H1 (cell line): ENCODE measurements at regions of chr17 and their contacts with region 1.

Region 1: DNA sequence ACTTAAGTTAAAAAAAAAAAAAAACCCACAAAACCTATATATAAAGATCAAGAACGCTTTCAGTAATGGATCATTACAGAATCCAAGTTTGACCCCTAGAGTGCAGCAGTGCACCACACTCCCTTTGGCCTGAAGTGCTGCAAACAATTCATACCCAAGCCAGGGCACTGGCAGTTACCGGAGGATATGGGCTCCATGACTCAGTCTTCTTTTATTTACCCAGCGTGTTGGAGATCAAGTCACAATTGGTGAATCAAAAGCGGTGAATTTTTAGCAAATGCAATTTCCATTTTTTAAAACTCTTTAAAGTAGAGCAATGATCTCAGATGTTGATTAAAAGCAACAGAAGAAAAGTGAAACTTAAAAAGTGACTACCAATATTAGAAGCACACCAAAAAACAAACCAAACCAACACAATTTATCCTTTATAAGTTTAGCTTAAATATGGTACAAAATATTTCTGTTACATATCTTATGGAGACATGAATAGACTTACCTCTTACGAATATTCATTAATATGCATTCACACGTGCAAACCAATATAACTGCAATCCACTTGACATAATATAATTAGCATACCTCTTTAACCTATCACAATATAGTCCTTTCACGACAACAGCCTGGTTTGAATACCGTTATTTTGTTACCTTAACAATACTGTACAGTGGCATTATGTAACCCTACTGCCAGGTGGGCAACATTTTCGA is 46.3 kb downstream of the ZNF652 start:
- DNase-seq: peak; percentile 31 to 62
- H3K4me3 ChIP-seq: no peak overlapping the region
- H3K27ac ChIP-seq: no peak overlapping the region
- H3K4me1 ChIP-seq: no peaks in the 10 kb centered on the region
- H3K27me3 ChIP-seq: no peaks in the 10 kb centered on the region
- CTCF ChIP-seq: peak; percentile 27 to 83 (median 71)
- EP300 ChIP-seq: no peak
- POLR2A ChIP-seq: no peak
- RAD21 ChIP-seq: peak; percentile 96 to 98

Region 2: GRCh38 chr17:49146620-49147306 is 168.9 kb before region 1 on chr17:
- CTCF ChIA-PET with region 1: no interaction called
- POLR2A ChIA-PET with region 1: no interaction called
- DNase-seq: no peak
- H3K4me3 ChIP-seq: no peak overlapping the region
- H3K27ac ChIP-seq: no peak overlapping the region
- H3K4me1 ChIP-seq: no peaks in the 10 kb centered on the region
- H3K27me3 ChIP-seq: no peaks in the 10 kb centered on the region
- CTCF ChIP-seq: no peak
- EP300 ChIP-seq: no peak
- POLR2A ChIP-seq: no peak
- RAD21 ChIP-seq: no peak

Region 3: GRCh38 chr17:49361902-49362722 is 46.4 kb after region 1 on chr17 and contains the start of gene ZNF652:
- CTCF ChIA-PET with region 1: interaction called, 47 read pairs
- POLR2A ChIA-PET with region 1: no interaction called
- DNase-seq: peak; percentile 93 to 97
- H3K4me3 ChIP-seq: peak within 1 kb of the TSS; percentile 86 to 98 (median 89)
- H3K27ac ChIP-seq: peak within 1 kb of the TSS; percentile 82; the same call in 1 of the 2 replicates
- H3K4me1 ChIP-seq: peaks cover 5 to 14% (median 7%) of the 10 kb centered on the region in 4 experiments; a peak in 6 of 7 replicates
- H3K27me3 ChIP-seq: no peaks in the 10 kb centered on the region
- CTCF ChIP-seq: no peak
- EP300 ChIP-seq: no peak
- POLR2A ChIP-seq: peak in 1 of 2 experiments; percentile 11; a peak in 1 of 3 replicates
- RAD21 ChIP-seq: no peak
- total RNA-seq, gene ZNF652: 36.5 and 39.6 TPM in 2 replicates

Region 4: DNA sequence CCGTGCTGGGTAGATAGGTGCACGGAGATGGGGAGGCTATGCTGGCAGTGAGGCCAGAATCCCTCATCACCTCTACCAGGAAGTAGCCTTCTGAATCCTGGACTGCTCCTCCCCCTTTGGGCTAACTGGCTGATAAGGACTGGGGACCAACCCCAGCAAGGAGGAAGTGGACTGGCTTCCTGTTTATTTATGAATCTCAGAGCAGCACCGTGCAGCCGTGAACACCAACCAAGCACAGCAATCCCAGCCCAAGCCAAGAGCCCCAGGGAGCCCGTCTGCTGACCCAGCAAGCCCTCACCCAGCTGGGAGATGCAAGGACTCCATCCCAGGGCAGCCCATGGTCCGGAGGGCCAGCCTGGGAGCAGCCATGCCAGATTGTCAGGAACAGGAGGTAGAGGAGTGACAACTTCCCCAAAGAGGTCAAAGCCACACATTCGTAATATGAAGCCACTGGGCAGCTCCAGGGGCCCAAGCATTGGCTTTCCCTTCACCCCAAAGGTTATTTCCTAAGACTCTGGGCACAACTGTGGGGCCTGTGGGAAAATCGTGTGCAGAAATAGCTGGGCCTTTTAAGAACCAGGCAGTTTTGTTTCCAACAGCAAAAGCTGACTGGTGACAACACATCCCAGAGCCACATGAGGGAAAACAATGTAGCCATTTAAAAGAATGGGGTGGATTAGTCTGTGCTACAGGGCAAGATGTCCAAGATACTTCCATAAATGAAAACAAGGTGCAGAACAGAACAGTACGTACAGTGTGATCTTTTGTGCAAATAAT is 75.0 kb after region 1 on chr17:
- CTCF ChIA-PET with region 1: interaction called, 80 read pairs
- POLR2A ChIA-PET with region 1: no interaction called
- DNase-seq: no peak
- H3K4me3 ChIP-seq: no peak overlapping the region
- H3K27ac ChIP-seq: no peak overlapping the region
- H3K4me1 ChIP-seq: no peaks in the 10 kb centered on the region
- H3K27me3 ChIP-seq: no peaks in the 10 kb centered on the region
- CTCF ChIP-seq: no peak
- EP300 ChIP-seq: no peak
- POLR2A ChIP-seq: no peak
- RAD21 ChIP-seq: no peak

Region 5: DNA sequence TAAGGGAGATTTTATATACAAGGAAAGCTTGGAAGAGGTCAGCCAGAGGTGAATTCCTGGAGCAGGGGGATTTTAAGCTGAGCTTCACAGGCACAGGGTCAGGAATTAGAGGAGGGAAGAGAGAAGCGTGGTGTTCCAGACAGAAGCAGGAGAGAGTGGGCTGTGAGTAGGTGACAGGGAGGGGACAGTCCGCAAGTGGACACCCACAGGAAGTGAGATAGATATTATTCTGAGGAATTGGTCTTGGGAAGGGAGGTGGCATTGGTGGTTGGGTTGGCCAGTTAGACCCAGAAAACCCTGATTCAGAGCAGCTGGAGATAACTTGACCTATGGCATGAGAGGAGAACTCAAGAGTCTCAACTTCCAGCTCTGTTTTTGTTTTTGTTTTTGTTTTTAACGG is 84.3 kb after region 1 on chr17:
- CTCF ChIA-PET with region 1: interaction called, 80 read pairs
- POLR2A ChIA-PET with region 1: no interaction called
- DNase-seq: no peak
- H3K4me3 ChIP-seq: no peak overlapping the region
- H3K27ac ChIP-seq: no peak overlapping the region
- H3K4me1 ChIP-seq: no peaks in the 10 kb centered on the region
- H3K27me3 ChIP-seq: no peaks in the 10 kb centered on the region
- CTCF ChIP-seq: no peak
- EP300 ChIP-seq: no peak
- POLR2A ChIP-seq: no peak
- RAD21 ChIP-seq: no peak